Esophagus muscularis mucosa (tissue), 4 donors: ENCODE measurements at regions of chr6 and their contacts with region 1.

Region 1: GRCh38 chr6:42260972-42261371 is 43.3 kb upstream of the MRPS10 start:
- DNase-seq: no peak
- H3K4me3 ChIP-seq: no peak overlapping the region
- H3K27ac ChIP-seq: peak overlapping the region in 2 of 4 donors; percentile 6 to 24
- H3K4me1 ChIP-seq: peaks cover 13 to 29% (median 23%) of the 10 kb centered on the region in 4 donors
- H3K27me3 ChIP-seq: no peaks in the 10 kb centered on the region
- CTCF ChIP-seq: peak; percentile 36 to 63 (median 49)
- EP300 ChIP-seq: no peak
- POLR2A ChIP-seq: no peak

Region 2: GRCh38 chr6:42217519-42218367 is 43.2 kb before region 1 on chr6 and contains the start of gene MRPS10:
- intact Hi-C with region 1: no loop called
- DNase-seq: peak; percentile 98
- H3K4me3 ChIP-seq: peak within 1 kb of the TSS; percentile 65 to 77 (median 71)
- H3K27ac ChIP-seq: peak within 1 kb of the TSS; percentile 73 to 87 (median 81)
- H3K4me1 ChIP-seq: peaks cover 20 to 33% (median 29%) of the 10 kb centered on the region in 4 donors
- H3K27me3 ChIP-seq: no peaks in the 10 kb centered on the region
- CTCF ChIP-seq: peak in 1 of 3 experiments; percentile 37
- EP300 ChIP-seq: no peak
- POLR2A ChIP-seq: peak; percentile 65
- total RNA-seq, gene MRPS10: 27.8 to 38.8 (median 29.3) TPM

Region 3: GRCh38 chr6:42230345-42231321 is 30.3 kb before region 1 on chr6:
- intact Hi-C with region 1: no loop called
- DNase-seq: no peak
- H3K4me3 ChIP-seq: no peak overlapping the region
- H3K27ac ChIP-seq: no peak overlapping the region
- H3K4me1 ChIP-seq: peaks cover 0 to 4% (median 2%) of the 10 kb centered on the region in 4 donors
- H3K27me3 ChIP-seq: no peaks in the 10 kb centered on the region
- CTCF ChIP-seq: no peak
- EP300 ChIP-seq: no peak
- POLR2A ChIP-seq: no peak

Region 4: GRCh38 chr6:42453031-42453653 is 192.2 kb after region 1 on chr6:
- intact Hi-C with region 1: loop called (anchors 10 kb)
- DNase-seq: peak; percentile 96
- H3K4me3 ChIP-seq: peak overlapping the region; percentile 78 to 96 (median 88)
- H3K27ac ChIP-seq: peak overlapping the region; percentile 87 to 92 (median 90)
- H3K4me1 ChIP-seq: peaks cover 27 to 47% (median 40%) of the 10 kb centered on the region in 4 donors
- H3K27me3 ChIP-seq: no peaks in the 10 kb centered on the region
- CTCF ChIP-seq: peak in 2 of 3 experiments; percentile 3 to 4
- EP300 ChIP-seq: no peak
- POLR2A ChIP-seq: peak; percentile 25

Region 5: DNA sequence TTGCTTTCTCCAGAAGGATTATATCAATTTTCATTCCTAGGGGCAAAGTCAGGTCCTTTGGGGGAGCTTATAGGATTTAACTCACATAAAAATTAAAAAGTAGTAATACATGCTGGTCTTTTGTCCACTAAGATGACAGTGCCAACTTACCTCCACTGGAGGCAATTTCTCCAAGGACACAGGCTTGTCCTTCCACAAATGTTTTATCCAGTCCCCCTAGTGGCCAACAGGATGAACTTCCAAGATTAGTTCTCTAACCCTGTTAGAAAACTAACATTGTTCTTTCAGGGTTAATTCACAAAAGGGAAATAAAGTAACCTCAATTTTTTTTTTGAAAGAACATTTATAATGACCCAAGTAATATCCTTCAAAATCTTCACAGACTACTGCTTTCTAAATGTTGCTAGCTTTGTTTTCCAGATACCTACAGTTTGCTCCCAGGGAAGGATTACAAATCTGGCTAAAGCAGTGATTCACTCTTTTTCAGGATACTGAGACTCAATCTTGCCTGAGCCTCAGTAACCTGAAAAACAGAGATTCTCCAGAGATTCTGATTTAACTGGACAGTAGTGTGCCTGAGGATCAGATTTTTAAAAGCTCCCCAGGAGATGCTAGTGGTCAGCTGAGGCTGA is 271.2 kb after region 1 on chr6:
- intact Hi-C with region 1: loop called (anchors 2 kb)
- DNase-seq: no peak
- H3K4me3 ChIP-seq: no peak overlapping the region
- H3K27ac ChIP-seq: no peak overlapping the region
- H3K4me1 ChIP-seq: no peaks in the 10 kb centered on the region
- H3K27me3 ChIP-seq: no peaks in the 10 kb centered on the region
- CTCF ChIP-seq: peak; percentile 82 to 90 (median 86)
- EP300 ChIP-seq: no peak
- POLR2A ChIP-seq: no peak

Region 6: GRCh38 chr6:42547407-42548329 is 286.7 kb after region 1 on chr6:
- intact Hi-C with region 1: loop called (anchors 5 kb)
- DNase-seq: peak; percentile 94
- H3K4me3 ChIP-seq: peak overlapping the region; percentile 51 to 60 (median 52)
- H3K27ac ChIP-seq: peak overlapping the region; percentile 60 to 74 (median 70)
- H3K4me1 ChIP-seq: peaks cover 4 to 14% (median 12%) of the 10 kb centered on the region in 4 donors
- H3K27me3 ChIP-seq: no peaks in the 10 kb centered on the region
- CTCF ChIP-seq: peak; percentile 93 to 97 (median 93)
- EP300 ChIP-seq: no peak
- POLR2A ChIP-seq: no peak

Region 7: GRCh38 chr6:42572523-42572922 is 311.6 kb after region 1 on chr6:
- intact Hi-C with region 1: no loop called
- DNase-seq: no peak
- H3K4me3 ChIP-seq: no peak overlapping the region
- H3K27ac ChIP-seq: no peak overlapping the region
- H3K4me1 ChIP-seq: peaks cover 43 to 76% (median 71%) of the 10 kb centered on the region in 4 donors
- H3K27me3 ChIP-seq: no peaks in the 10 kb centered on the region
- CTCF ChIP-seq: no peak
- EP300 ChIP-seq: no peak
- POLR2A ChIP-seq: no peak